GM12878 (cell line): ENCODE measurements at regions of chr19 and their contacts with region 1.

Region 1: DNA sequence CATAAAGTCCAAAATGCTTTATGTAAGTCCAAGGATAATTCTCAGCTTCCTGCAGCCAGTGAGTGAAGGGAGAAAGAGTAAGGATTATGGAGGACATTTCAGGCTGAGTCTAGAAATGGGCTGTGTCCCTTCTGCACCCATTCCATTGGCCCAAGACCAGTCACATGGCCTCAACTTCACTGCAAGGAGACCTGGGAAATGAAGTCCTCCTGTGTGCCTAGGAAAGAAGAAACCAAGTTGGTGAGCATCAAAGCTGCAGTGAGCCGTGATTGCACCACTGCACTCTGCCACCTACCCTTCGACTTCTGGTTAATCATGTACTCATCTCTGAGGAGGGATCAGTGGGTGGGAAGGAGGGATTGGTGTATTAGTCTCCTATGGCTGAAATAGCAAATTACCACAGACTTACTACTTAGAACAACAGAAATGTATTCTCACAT is 3.6 kb upstream of the CD37 start:
- DNase-seq: peak; percentile 81
- ATAC-seq: peak; percentile 71
- H3K4me3 ChIP-seq: peak overlapping the region; percentile 50
- H3K27ac ChIP-seq: peak overlapping the region; percentile 87
- H3K4me1 ChIP-seq: peaks cover 79% of the 10 kb centered on the region
- H3K27me3 ChIP-seq: no peaks in the 10 kb centered on the region
- CTCF ChIP-seq: no peak
- EP300 ChIP-seq: no peak
- POLR2A ChIP-seq: no peak
- RAD21 ChIP-seq: no peak

Region 2: GRCh38 chr19:49224856-49225255 is 106.8 kb before region 1 on chr19:
- CTCF ChIA-PET with region 1: interaction called, 3 read pairs
- POLR2A ChIA-PET with region 1: no interaction called
- RAD21 ChIA-PET with region 1: interaction called, 4 read pairs
- SMC1A ChIA-PET with region 1: interaction called, 4 read pairs
- in situ Hi-C with region 1: no loop called
- intact Hi-C with region 1: loop called (anchors 2 kb)
- DNase-seq: no peak
- ATAC-seq: peak; percentile 90
- H3K4me3 ChIP-seq: no peak overlapping the region
- H3K27ac ChIP-seq: no peak overlapping the region
- H3K4me1 ChIP-seq: no peaks in the 10 kb centered on the region
- H3K27me3 ChIP-seq: no peaks in the 10 kb centered on the region; a peak in 1 of 4 replicates
- CTCF ChIP-seq: peak; percentile 41 to 60 (median 42); a peak in 5 of 6 replicates
- EP300 ChIP-seq: no peak
- POLR2A ChIP-seq: no peak
- RAD21 ChIP-seq: peak; percentile 66

Region 3: DNA sequence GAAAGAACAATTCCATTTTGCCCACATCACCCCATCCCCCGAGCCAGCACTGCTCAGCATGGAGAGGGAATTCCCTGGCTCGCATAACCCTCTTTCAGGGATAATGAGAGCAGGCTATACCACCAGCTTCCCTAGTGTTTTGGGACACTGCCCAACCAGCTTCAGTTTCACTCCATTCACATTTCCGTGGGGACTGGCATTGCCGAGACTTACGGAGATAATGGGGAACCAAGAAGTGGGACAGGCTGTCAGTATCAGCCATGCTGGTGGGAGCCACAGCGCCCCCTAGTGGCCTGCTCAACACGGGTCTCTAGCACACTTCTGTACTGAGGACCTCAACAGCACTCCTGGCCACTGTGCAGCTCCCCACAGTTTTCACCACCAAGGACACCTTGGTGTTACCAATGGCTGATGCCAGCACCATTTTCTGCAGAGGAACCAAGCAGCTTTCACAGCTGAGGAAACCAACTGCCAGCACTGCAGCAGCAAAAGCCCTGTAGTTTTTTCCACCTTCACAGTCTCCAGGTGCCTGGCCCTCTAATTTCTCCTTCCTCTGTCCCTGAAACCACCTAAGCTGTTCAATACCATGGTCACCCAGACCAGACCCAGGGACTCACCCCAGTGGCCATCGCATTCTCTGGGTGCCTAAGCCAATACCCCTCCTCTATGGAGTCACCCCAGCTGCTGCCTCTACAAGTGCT is 30.3 kb before region 1 on chr19:
- CTCF ChIA-PET with region 1: interaction called, 22 read pairs
- POLR2A ChIA-PET with region 1: no interaction called
- RAD21 ChIA-PET with region 1: interaction called, 6 read pairs
- SMC1A ChIA-PET with region 1: interaction called, 11 read pairs
- in situ Hi-C with region 1: no loop called
- intact Hi-C with region 1: no loop called
- DNase-seq: peak; percentile 40
- ATAC-seq: peak; percentile 100
- H3K4me3 ChIP-seq: no peak overlapping the region
- H3K27ac ChIP-seq: no peak overlapping the region
- H3K4me1 ChIP-seq: no peaks in the 10 kb centered on the region; the same call in 1 of the 2 replicates
- H3K27me3 ChIP-seq: no peaks in the 10 kb centered on the region
- CTCF ChIP-seq: peak; percentile 88 to 96 (median 96); a peak in 5 of 6 replicates
- EP300 ChIP-seq: no peak
- POLR2A ChIP-seq: no peak
- RAD21 ChIP-seq: peak; percentile 49

Region 4: GRCh38 chr19:49451430-49452181 is 120.0 kb after region 1 on chr19 and contains the start of gene PIH1D1:
- CTCF ChIA-PET with region 1: interaction called, 5 read pairs
- POLR2A ChIA-PET with region 1: interaction called, 16 read pairs
- RAD21 ChIA-PET with region 1: interaction called, 4 read pairs
- SMC1A ChIA-PET with region 1: interaction called, 4 read pairs
- in situ Hi-C with region 1: no loop called
- intact Hi-C with region 1: loop called (anchors 5 kb)
- DNase-seq: peak; percentile 99
- ATAC-seq: peak; percentile 77
- H3K4me3 ChIP-seq: peak within 1 kb of the TSS; percentile 85
- H3K27ac ChIP-seq: peak within 1 kb of the TSS; percentile 100
- H3K4me1 ChIP-seq: peaks cover 12% of the 10 kb centered on the region
- H3K27me3 ChIP-seq: no peaks in the 10 kb centered on the region
- CTCF ChIP-seq: no peak
- EP300 ChIP-seq: no peak
- POLR2A ChIP-seq: peak; percentile 80
- RAD21 ChIP-seq: no peak
- polyA plus RNA-seq, gene PIH1D1: 16.1 to 39.9 TPM

Region 5: DNA sequence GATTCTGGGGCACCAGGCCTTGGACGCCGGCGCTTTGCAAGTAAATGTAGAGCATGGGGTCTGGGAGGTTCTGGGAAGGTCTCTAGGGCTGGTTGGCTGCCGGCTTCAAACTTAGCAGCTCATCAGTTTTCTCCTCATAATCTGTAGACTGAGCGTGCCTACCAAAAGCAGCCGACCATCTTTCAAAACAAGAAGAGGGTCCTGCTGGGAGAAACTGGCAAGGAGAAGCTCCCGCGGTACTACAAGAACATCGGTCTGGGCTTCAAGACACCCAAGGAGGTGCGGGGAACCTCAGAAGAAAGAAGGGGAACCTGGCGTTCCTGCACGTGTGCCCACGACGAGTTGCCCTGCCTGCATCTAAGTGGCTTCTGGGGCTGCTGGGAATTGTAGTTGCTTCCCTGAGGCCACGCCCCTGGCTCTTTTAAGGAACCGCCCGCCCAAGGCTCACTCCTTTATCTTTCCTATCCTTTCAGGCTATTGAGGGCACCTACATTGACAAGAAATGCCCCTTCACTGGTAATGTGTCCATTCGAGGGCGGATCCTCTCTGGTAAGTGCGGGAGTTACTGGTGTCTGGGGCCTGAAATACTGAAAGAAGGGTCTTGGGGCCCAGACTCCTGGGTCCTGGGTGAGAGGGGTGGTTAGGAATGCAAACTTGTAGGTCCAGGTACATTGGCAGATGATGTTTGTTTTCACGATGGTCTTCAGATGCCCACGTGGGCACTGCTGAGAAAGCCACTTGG is 165.6 kb after region 1 on chr19:
- CTCF ChIA-PET with region 1: no interaction called
- POLR2A ChIA-PET with region 1: no interaction called
- RAD21 ChIA-PET with region 1: no interaction called
- SMC1A ChIA-PET with region 1: interaction called, 3 read pairs
- in situ Hi-C with region 1: no loop called
- intact Hi-C with region 1: loop called (anchors 2 kb)
- DNase-seq: no peak
- ATAC-seq: peak; percentile 41
- H3K4me3 ChIP-seq: peak overlapping the region; percentile 79
- H3K27ac ChIP-seq: peak overlapping the region; percentile 85
- H3K4me1 ChIP-seq: peaks cover 35% of the 10 kb centered on the region
- H3K27me3 ChIP-seq: no peaks in the 10 kb centered on the region
- CTCF ChIP-seq: no peak
- EP300 ChIP-seq: no peak
- POLR2A ChIP-seq: peak; percentile 74
- RAD21 ChIP-seq: no peak